ENCODE measurements at regions of chr1 and their contacts with region 1.

Region 1: GRCh38 chr1:211578640-211579433 is at the start of gene SLC30A1:
- DNase-seq: peak; percentile 99
- ATAC-seq: peak; percentile 90
- H3K4me3 Mint-ChIP-seq: peak within 1 kb of the TSS; percentile 94
- H3K27ac Mint-ChIP-seq: peak within 1 kb of the TSS; percentile 89
- H3K4me1 Mint-ChIP-seq: peaks cover 28% of the 10 kb centered on the region
- H3K27me3 Mint-ChIP-seq: no peaks in the 10 kb centered on the region
- CTCF ChIP-seq: no peak
- total RNA-seq, gene SLC30A1: 14.2 and 15.6 TPM in 2 replicates

Region 2: DNA sequence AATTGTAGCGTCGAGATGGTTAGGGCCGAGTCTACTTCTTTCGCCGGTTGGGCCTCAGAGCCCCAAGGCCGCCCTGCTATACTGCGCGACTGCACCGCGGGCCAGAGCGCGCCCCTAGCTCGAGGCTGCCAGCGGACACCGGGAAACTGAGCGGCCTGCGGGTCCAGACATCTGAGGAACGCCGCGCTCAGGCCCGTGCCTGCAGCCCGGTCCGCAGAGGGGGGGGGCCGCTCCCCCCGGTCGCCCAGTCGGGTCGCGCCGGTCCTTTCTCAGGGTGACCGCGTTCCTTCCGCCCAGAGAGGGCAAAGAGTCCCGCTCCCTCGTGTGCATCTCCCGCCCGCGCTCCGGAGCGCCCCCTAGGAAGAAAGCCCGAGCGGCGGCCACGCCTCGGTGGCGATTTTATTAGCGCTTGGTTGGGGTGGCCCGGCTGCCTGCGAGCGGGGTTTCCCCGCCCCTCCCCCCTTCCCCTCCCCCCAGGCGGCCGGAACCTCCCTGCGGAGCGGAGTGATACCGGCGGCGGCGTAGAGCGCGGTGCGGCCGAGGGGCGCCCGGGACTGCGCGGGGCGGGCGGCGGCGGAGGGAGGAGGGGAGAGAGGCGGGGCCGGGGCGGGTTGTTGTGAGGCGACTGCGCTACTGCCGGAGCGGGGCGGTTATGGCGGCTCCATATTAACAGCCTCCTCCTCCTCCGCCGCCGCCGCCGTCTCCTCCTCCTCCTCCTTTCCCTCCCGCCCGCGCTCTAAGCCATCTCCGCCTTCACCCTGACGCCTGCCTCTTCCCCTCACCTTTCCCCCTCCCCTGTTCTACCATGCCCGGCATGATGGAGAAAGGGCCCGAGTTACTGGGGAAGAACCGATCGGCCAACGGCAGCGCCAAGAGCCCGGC is 319.8 kb before region 1 on chr1 and contains the start of gene RCOR3:
- CTCF ChIA-PET with region 1: no interaction called
- POLR2A ChIA-PET with region 1: no interaction called
- intact Hi-C with region 1: loop called (anchors 1 kb)
- DNase-seq: peak; percentile 86
- ATAC-seq: peak; percentile 75
- H3K4me3 Mint-ChIP-seq: peak within 1 kb of the TSS; percentile 93
- H3K27ac Mint-ChIP-seq: peak within 1 kb of the TSS; percentile 97
- H3K4me1 Mint-ChIP-seq: peaks cover 20% of the 10 kb centered on the region
- H3K27me3 Mint-ChIP-seq: no peaks in the 10 kb centered on the region
- CTCF ChIP-seq: peak; percentile 59
- total RNA-seq, gene RCOR3: 59.3 and 72.3 TPM in 2 replicates

Region 3: DNA sequence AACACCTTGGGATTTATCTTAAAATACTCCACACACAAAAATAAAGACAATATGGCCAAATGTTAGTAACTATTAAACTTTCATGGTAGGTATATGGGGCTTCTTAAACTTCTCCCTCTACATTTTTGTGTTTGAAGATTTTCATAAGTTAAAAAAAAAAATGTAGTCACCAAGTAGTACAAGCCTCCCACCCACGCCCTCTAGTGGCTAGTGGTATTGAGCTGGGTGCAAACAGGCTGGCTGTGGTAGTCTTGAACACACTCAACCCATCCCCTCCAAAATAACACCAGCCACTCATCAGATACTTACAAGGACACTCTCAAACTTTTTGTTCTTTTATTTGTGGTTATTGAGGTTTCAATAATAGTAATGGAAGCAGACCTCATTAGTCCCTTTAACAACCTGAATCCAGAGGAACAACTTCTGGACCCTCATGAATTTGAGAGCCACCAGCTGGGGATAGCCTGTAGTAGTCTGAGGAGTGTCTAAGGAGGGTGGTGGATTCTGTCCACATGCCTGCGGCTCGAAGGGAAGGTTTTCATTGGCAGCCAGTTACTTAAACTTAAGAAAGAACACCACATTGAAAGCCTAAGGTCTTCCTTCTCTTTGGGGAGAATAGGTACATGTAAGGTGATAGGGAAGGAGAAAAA is 102.5 kb before region 1 on chr1:
- CTCF ChIA-PET with region 1: no interaction called
- POLR2A ChIA-PET with region 1: no interaction called
- intact Hi-C with region 1: no loop called
- DNase-seq: peak; percentile 39
- ATAC-seq: peak; percentile 72
- H3K4me3 Mint-ChIP-seq: no peak overlapping the region
- H3K27ac Mint-ChIP-seq: no peak overlapping the region
- H3K4me1 Mint-ChIP-seq: peaks cover 2% of the 10 kb centered on the region
- H3K27me3 Mint-ChIP-seq: peaks cover 27% of the 10 kb centered on the region
- CTCF ChIP-seq: peak; percentile 56

Region 4: DNA sequence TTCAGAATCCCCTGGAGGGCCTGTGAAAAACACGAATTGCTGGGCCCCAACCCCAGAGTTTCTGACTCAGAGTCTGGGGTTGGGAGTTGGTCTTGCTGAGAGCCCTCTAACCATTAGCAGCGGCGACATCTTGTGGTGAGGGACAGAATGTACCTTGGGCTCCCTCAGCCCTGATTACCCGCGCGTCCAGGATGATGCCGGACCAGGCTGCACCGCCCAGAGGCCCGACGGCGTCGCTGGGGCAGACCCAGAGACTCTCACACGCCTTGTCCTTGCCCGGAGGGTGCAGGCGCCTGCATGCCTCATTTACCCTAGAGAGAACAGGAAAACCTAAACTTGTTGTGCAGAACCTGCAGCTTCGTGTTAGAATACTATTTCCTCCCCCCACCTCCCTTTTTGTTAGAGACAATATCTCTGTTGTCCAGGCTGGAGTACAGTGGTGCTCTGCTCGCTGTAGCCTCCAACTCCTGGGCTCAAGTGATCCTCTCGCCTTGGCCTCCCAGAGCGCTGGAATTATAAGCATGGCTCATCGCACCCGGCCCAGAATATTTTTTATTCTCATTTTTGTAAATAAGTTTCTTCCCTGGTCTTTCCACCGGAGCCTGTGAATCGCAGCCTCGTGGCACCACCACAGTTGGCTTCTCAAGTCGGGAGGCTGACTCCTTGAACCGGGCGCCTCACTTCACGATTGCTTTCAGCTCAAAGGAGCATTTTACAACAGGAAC is 64.6 kb before region 1 on chr1:
- CTCF ChIA-PET with region 1: interaction called, 5 read pairs
- POLR2A ChIA-PET with region 1: interaction called, 11 read pairs
- intact Hi-C with region 1: loop called (anchors 1 kb)
- DNase-seq: peak; percentile 59
- ATAC-seq: peak; percentile 71
- H3K4me3 Mint-ChIP-seq: peak overlapping the region; percentile 78
- H3K27ac Mint-ChIP-seq: peak overlapping the region; percentile 51
- H3K4me1 Mint-ChIP-seq: peaks cover 43% of the 10 kb centered on the region
- H3K27me3 Mint-ChIP-seq: peaks cover 6% of the 10 kb centered on the region
- CTCF ChIP-seq: no peak

Region 5: DNA sequence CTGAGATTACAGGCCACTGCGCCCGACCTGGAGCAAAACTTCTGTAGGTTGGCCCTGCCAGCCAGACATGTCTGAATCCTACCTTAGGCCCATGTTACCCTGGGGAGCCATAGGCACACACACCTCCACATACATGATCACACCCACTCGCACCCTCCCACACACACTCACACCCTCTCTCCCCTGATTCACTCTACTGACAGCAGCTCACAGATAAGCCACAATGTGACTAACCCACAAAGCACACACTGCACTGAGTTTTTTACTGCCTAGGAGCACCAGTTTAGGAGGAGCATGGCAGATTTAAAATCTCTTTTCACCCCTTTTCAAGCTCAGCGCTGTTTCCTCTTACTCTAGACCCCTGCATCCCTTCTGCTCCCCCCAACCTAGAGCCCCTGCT is 41.6 kb before region 1 on chr1:
- CTCF ChIA-PET with region 1: no interaction called
- POLR2A ChIA-PET with region 1: no interaction called
- intact Hi-C with region 1: no loop called
- DNase-seq: no peak
- ATAC-seq: no peak
- H3K4me3 Mint-ChIP-seq: no peak overlapping the region
- H3K27ac Mint-ChIP-seq: no peak overlapping the region
- H3K4me1 Mint-ChIP-seq: no peaks in the 10 kb centered on the region
- H3K27me3 Mint-ChIP-seq: peaks cover 5% of the 10 kb centered on the region
- CTCF ChIP-seq: no peak

Region 6: GRCh38 chr1:211648980-211649934 is 70.4 kb after region 1 on chr1:
- CTCF ChIA-PET with region 1: interaction called, 4 read pairs
- POLR2A ChIA-PET with region 1: no interaction called
- intact Hi-C with region 1: loop called (anchors 1 kb)
- DNase-seq: no peak
- ATAC-seq: peak; percentile 86
- H3K4me3 Mint-ChIP-seq: no peak overlapping the region
- H3K27ac Mint-ChIP-seq: no peak overlapping the region
- H3K4me1 Mint-ChIP-seq: no peaks in the 10 kb centered on the region
- H3K27me3 Mint-ChIP-seq: peaks cover 6% of the 10 kb centered on the region
- CTCF ChIP-seq: no peak

Region 7: DNA sequence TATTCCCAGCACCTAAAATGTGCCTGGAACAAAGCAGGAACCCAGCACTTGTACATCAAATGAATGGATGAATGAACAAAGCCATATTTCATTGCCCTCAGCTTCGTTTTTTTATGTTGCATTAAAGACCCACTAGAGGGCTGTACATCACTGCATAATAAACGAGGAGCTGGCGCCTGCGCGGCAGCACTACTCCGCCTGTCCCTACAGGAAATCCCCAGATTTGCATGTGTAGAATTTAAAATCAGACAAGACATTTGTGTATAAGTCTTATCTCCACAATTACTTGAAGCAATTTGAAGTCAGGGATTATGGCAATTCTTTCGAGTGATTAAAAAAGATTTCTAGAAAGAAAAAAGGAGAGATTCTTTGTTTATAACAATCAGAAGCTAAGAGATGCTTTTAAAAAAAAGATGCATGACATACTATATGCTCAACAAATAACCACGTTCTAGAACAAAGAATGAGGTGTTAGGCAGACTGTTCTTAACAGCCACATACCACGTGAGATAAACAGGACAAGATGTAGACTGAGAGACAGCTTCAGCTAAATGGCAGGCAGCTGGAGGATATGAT is 102.0 kb after region 1 on chr1:
- CTCF ChIA-PET with region 1: no interaction called
- POLR2A ChIA-PET with region 1: no interaction called
- intact Hi-C with region 1: loop called (anchors 1 kb)
- DNase-seq: peak; percentile 48
- ATAC-seq: peak; percentile 90
- H3K4me3 Mint-ChIP-seq: peak overlapping the region; percentile 26
- H3K27ac Mint-ChIP-seq: peak overlapping the region; percentile 85
- H3K4me1 Mint-ChIP-seq: peaks cover 41% of the 10 kb centered on the region
- H3K27me3 Mint-ChIP-seq: no peaks in the 10 kb centered on the region
- CTCF ChIP-seq: no peak

Region 8: DNA sequence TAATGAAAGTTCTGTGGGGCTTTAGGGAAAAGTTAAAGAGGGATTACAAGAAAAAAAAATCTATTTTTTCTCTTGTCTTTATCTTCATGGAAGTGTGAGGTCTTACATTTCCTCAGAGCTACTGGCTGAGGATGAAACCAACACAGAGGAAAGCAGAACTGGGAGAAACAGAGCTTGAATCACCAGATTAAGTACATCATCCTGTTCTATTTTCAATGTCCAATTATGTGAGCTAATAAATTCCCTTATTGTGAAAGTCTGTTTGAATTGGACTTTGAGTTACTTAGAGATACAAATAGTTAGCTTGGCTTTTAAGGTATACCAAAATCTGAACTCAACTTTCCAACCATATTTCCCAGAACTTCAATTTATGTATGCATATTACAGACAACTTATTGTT is 182.6 kb after region 1 on chr1:
- CTCF ChIA-PET with region 1: no interaction called
- POLR2A ChIA-PET with region 1: no interaction called
- intact Hi-C with region 1: no loop called
- DNase-seq: no peak
- ATAC-seq: no peak
- H3K4me3 Mint-ChIP-seq: no peak overlapping the region
- H3K27ac Mint-ChIP-seq: no peak overlapping the region
- H3K4me1 Mint-ChIP-seq: no peaks in the 10 kb centered on the region
- H3K27me3 Mint-ChIP-seq: no peaks in the 10 kb centered on the region
- CTCF ChIP-seq: no peak

Region 9: DNA sequence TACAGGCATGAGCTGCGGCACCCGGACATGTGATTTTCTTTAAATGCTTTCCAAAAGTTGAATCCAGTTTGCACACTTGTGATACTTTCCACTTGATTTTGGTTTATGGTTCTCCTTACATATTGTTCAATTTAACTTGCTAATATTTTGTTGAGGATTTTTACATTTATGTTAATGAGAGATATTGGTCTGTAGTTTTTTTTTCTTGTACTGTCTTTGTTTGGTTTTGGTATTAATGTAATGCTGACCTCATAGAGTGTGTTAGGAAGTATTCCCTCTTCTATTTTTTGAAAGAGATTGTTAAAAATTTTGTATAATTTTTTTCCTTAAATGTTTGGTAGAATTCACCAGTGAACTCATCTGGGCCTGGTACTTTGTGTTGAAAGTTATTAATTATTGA is 286.3 kb after region 1 on chr1:
- CTCF ChIA-PET with region 1: no interaction called
- POLR2A ChIA-PET with region 1: no interaction called
- intact Hi-C with region 1: no loop called
- DNase-seq: no peak
- ATAC-seq: no peak
- H3K4me3 Mint-ChIP-seq: no peak overlapping the region
- H3K27ac Mint-ChIP-seq: no peak overlapping the region
- H3K4me1 Mint-ChIP-seq: no peaks in the 10 kb centered on the region
- H3K27me3 Mint-ChIP-seq: peaks cover 6% of the 10 kb centered on the region
- CTCF ChIP-seq: no peak

Region 10: DNA sequence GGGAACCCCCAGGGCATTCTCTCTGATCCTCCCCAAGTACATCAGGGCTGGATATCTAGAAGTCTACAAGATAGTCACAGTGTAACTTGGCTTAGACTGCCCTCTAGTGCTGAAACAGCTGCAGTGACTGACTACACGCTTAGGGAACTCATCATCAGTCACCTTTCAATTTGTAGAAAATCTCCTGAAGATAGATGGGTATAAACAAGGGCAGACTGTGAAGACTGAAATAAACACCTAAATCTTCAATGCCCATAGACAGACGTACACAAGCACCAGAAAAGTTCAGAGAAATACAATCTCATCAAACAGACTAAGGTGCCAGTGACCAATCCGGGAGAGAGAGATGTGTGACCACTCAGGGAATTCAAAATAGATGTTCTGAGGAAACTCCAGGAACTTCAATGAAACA is 789.2 kb after region 1 on chr1:
- CTCF ChIA-PET with region 1: no interaction called
- POLR2A ChIA-PET with region 1: no interaction called
- intact Hi-C with region 1: loop called (anchors 5 kb)
- DNase-seq: no peak
- ATAC-seq: peak; percentile 89
- H3K4me3 Mint-ChIP-seq: no peak overlapping the region
- H3K27ac Mint-ChIP-seq: no peak overlapping the region
- H3K4me1 Mint-ChIP-seq: no peaks in the 10 kb centered on the region
- H3K27me3 Mint-ChIP-seq: no peaks in the 10 kb centered on the region
- CTCF ChIP-seq: peak; percentile 25

Region 11: GRCh38 chr1:212791676-212792395 is 1213.0 kb after region 1 on chr1 and contains the starts of genes NSL1 and TATDN3:
- CTCF ChIA-PET with region 1: no interaction called
- POLR2A ChIA-PET with region 1: no interaction called
- intact Hi-C with region 1: loop called (anchors 1 kb)
- DNase-seq: peak; percentile 98
- ATAC-seq: peak; percentile 73
- H3K4me3 Mint-ChIP-seq: peak within 1 kb of the TSS; percentile 99
- H3K27ac Mint-ChIP-seq: peak within 1 kb of the TSS; percentile 98
- H3K4me1 Mint-ChIP-seq: peaks cover 60% of the 10 kb centered on the region
- H3K27me3 Mint-ChIP-seq: no peaks in the 10 kb centered on the region
- CTCF ChIP-seq: no peak
- total RNA-seq, gene NSL1: 34.4 and 44.5 TPM in 2 replicates
- total RNA-seq, gene TATDN3: 30.3 and 31.4 TPM in 2 replicates